ENCODE measurements at regions of chr9 and their contacts with region 1.

Region 1: DNA sequence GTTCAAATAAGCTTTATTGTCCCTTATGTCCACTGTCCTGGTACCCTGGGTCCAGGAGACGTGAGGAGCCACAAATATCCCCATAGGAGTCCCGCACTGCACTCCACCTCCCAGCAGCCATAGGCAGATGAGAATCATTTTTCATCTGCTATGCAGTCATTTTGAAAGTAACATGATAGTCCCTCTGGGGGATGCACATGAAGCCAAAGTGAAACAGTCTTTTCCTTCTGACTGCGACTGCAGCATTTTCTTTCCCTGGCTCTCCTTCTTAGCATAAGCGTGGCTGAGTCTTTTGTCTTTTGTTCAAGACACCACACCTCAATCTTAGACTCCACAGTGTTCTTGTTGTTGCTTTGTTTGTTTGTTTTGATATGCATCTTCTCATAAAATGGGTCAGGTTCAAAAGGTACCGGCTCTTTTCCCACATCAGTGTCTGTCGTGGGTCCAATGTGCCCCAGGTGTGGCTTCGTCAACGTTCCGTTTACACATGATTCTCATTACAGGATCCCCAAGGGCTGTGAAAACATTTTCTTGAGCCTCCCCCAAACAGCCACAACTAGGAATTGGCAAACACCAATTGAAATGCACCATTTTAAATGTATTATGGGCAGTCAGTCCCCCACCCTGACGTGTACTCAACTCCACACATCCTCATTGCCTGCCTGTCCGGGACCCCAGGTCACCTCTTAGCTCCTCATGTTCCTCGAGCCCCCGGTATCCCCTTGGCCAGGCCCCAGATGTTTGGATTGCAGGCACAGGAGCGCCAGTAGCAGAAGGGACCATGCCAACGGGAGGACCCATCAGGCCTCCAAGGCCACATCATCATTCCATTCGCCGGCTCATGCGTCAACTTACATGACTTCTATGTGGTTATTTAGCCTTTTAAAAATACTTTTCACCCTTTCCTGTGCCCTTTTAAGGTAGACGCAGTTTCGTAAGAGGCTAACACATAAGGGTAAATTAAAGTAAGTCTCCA is 237.8 kb upstream of the DAPK1 start:
- DNase-seq: no peak
- ATAC-seq: no peak
- H3K4me3 Mint-ChIP-seq: no peak overlapping the region
- H3K27ac Mint-ChIP-seq: no peak overlapping the region
- H3K4me1 Mint-ChIP-seq: peaks cover 2% of the 10 kb centered on the region
- H3K27me3 Mint-ChIP-seq: peaks cover 8% of the 10 kb centered on the region

Region 2: DNA sequence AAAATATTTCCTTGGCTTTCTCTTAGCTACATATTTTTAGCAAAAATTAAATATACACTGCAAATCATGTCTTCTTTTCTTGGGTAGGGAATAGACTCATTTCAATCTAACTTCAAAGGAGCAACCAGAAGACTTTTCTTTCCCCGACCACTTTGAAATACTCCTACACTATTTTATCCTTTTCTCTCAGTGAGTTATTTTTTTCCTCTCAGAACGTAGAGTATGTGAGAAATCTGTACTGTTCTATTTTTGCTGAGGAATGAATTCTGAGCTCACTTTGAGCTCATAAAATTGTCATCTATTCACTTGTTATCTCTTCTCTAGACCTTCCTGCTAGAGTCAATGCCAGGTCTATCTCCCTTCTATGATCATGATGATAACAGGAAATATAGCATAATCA is 215.6 kb after region 1 on chr9:
- CTCF ChIA-PET with region 1: no interaction called
- POLR2A ChIA-PET with region 1: interaction called, 11 read pairs
- intact Hi-C with region 1: no loop called
- DNase-seq: no peak
- ATAC-seq: peak; percentile 63
- H3K4me3 Mint-ChIP-seq: no peak overlapping the region
- H3K27ac Mint-ChIP-seq: no peak overlapping the region
- H3K4me1 Mint-ChIP-seq: peaks cover 20% of the 10 kb centered on the region
- H3K27me3 Mint-ChIP-seq: no peaks in the 10 kb centered on the region